ENCODE measurements at regions of chr4 and their contacts with region 1.

Region 1: DNA sequence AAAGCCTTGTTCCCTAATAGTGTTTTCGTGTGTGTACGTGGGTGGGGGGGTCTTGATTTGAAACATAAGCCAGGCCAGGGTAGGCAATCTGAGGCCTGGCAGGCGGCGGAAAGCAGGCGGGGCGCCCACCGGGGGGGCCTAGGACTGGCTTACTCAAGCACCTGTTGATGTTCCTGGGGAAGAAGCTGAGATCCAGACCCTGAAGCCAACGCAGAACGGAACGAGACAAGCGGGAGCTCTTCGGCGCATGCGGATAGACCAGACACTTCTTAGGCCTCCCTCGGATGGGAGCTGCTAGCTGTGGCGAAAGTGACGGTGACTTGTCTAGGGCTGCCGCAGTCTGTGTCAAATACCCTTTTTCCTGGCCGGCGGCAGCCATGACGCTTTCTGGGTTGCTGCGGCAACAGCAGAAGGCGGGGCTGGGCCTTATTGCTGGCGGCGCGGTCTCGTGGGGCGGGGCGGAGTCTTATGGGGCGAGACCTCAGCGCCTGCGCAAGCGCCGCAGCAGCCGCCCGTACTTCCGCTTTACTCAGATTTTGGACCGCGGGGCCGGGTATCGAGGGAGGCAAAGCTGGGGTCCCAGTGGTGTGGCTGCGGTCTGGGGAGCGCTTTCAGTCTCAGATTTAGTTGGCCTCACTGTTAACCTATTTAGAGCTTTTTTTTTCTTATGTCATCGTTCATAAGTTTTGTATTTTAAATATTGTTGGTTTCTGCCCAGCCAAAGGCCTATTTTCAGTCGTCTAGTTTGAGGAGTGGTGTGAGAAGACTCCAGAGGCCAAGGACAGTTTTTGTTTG is at the start of gene SPATA4:
- DNase-seq: peak; percentile 76
- ATAC-seq: peak; percentile 68
- H3K4me3 ChIP-seq: peak within 1 kb of the TSS; percentile 82
- H3K27ac ChIP-seq: peak within 1 kb of the TSS; percentile 64
- H3K4me1 ChIP-seq: peaks cover 43% of the 10 kb centered on the region
- H3K27me3 ChIP-seq: no peaks in the 10 kb centered on the region
- CTCF ChIP-seq: no peak
- total RNA-seq, gene SPATA4: 0.15 TPM in 1 of 2 replicates, not detected in the other

Region 2: GRCh38 chr4:176107695-176108094 is 87.7 kb before region 1 on chr4:
- CTCF ChIA-PET with region 1: no interaction called
- POLR2A ChIA-PET with region 1: no interaction called
- intact Hi-C with region 1: no loop called
- DNase-seq: no peak
- ATAC-seq: no peak
- H3K4me3 ChIP-seq: no peak overlapping the region
- H3K27ac ChIP-seq: no peak overlapping the region
- H3K4me1 ChIP-seq: no peaks in the 10 kb centered on the region
- H3K27me3 ChIP-seq: no peaks in the 10 kb centered on the region
- CTCF ChIP-seq: no peak

Region 3: DNA sequence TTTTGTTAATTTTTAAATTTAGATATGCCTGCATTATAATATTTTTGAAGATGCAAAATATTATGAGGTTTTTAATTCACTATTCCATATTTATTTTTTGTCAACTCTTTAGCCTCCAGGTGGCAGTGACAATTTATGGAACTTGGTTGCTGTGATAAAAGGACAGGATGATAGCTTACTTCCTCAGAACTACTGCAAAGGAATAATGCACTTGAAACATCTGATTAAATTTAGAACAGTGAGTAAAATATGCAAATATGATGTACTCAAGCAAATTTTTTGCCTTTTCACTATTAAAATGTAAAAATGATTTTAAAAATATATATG is 45.1 kb before region 1 on chr4:
- CTCF ChIA-PET with region 1: no interaction called
- POLR2A ChIA-PET with region 1: no interaction called
- intact Hi-C with region 1: loop called (anchors 1 kb)
- DNase-seq: peak; percentile 47
- ATAC-seq: peak; percentile 60
- H3K4me3 ChIP-seq: no peak overlapping the region
- H3K27ac ChIP-seq: no peak overlapping the region; the same call in 1 of the 2 replicates
- H3K4me1 ChIP-seq: peaks cover 7% of the 10 kb centered on the region; the same call in 1 of the 2 replicates
- H3K27me3 ChIP-seq: no peaks in the 10 kb centered on the region
- CTCF ChIP-seq: peak; percentile 63

Region 4: GRCh38 chr4:176270669-176271068 is 75.3 kb after region 1 on chr4:
- CTCF ChIA-PET with region 1: no interaction called
- POLR2A ChIA-PET with region 1: no interaction called
- intact Hi-C with region 1: loop called (anchors 2 kb)
- DNase-seq: peak; percentile 94
- ATAC-seq: peak; percentile 98
- H3K4me3 ChIP-seq: peak overlapping the region; percentile 48; the same call in 1 of the 2 replicates
- H3K27ac ChIP-seq: peak overlapping the region; percentile 72
- H3K4me1 ChIP-seq: peaks cover 46% of the 10 kb centered on the region
- H3K27me3 ChIP-seq: no peaks in the 10 kb centered on the region
- CTCF ChIP-seq: no peak

Region 5: GRCh38 chr4:176309772-176310171 is 114.4 kb after region 1 on chr4:
- CTCF ChIA-PET with region 1: no interaction called
- POLR2A ChIA-PET with region 1: no interaction called
- intact Hi-C with region 1: no loop called
- DNase-seq: peak; percentile 47
- ATAC-seq: no peak
- H3K4me3 ChIP-seq: no peak overlapping the region
- H3K27ac ChIP-seq: no peak overlapping the region
- H3K4me1 ChIP-seq: peaks cover 14% of the 10 kb centered on the region
- H3K27me3 ChIP-seq: no peaks in the 10 kb centered on the region
- CTCF ChIP-seq: no peak